Activated T-helper 1 cell treated with anti-CD3 and anti-CD28 coated beads, Interleukin-12 subunit alpha, Interleukin-12 subunit beta, Interleukin-2, Interleukin-4 antibody, amounts not matched to agents 30 ng/mL and 10 ng/mL and 1 ng/mL, durations not matched to agents 14 hours and 24 hours and 36 hours (primary cell): ENCODE measurements at regions of chr6 and their contacts with region 1.

Region 1: DNA sequence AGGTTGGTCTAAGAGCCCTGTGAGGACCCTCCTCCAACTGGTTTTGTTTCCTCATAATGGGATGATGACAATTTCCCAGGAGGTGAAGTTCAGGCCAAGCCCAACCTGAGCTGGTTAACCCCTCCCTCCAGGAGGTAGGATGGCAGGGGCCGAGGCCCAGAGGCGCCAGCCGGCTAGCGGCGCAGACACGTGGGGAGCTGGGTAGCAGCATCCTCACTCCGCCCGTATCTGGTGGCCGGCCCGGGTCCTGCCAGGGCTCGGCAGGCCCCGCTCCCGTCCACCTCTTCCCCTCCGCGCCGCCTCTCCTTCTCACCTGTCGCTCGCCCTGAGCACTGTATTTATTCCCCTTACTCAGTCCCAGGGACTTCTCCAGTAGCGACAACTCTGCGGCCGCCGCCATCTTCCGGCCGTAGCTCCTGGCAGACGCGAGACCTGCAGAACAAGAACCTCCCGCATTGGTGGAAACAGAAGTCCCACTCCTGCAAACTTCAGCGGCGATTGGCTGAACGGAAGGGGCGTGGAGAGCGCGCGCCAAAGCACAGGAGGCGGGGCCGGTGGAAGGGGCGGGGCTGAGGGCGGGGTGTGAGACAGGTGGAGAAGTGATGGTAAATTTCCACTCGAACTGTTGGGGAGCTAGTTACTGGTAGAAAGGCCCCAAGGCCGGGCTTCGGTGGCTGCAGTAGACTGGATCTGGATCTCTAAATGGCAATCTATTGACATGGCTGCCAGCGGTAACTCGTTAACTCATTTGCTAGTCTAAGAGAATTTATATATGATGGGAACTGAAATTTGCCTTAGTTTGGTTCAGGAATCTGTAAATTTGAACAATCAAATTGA is at the start of gene EEF1E1:
- DNase-seq: peak; percentile 87
- H3K4me3 Mint-ChIP-seq: peak within 1 kb of the TSS; percentile 92
- H3K27ac Mint-ChIP-seq: peak within 1 kb of the TSS; percentile 97
- H3K4me1 Mint-ChIP-seq: peaks cover 34% of the 10 kb centered on the region
- H3K27me3 Mint-ChIP-seq: peaks cover 4% of the 10 kb centered on the region
- total RNA-seq, gene EEF1E1: 92.8 and 99.8 TPM in 2 replicates

Region 2: GRCh38 chr6:7312616-7313504 is 789.5 kb before region 1 on chr6 and contains the start of gene SSR1:
- intact Hi-C with region 1: loop called (anchors 1 kb)
- DNase-seq: peak; percentile 95
- H3K4me3 Mint-ChIP-seq: peak within 1 kb of the TSS; percentile 98
- H3K27ac Mint-ChIP-seq: peak within 1 kb of the TSS; percentile 94
- H3K4me1 Mint-ChIP-seq: peaks cover 35% of the 10 kb centered on the region
- H3K27me3 Mint-ChIP-seq: no peaks in the 10 kb centered on the region
- total RNA-seq, gene SSR1: 160 and 168 TPM in 2 replicates

Region 3: GRCh38 chr6:8006208-8006607 is 96.1 kb before region 1 on chr6:
- intact Hi-C with region 1: no loop called
- DNase-seq: no peak
- H3K4me3 Mint-ChIP-seq: no peak overlapping the region
- H3K27ac Mint-ChIP-seq: no peak overlapping the region
- H3K4me1 Mint-ChIP-seq: no peaks in the 10 kb centered on the region
- H3K27me3 Mint-ChIP-seq: peaks cover 3% of the 10 kb centered on the region

Region 4: GRCh38 chr6:8017276-8017701 is 85.1 kb before region 1 on chr6:
- intact Hi-C with region 1: loop called (anchors 1 kb)
- DNase-seq: no peak
- H3K4me3 Mint-ChIP-seq: peak overlapping the region; percentile 86
- H3K27ac Mint-ChIP-seq: peak overlapping the region; percentile 97
- H3K4me1 Mint-ChIP-seq: peaks cover 22% of the 10 kb centered on the region
- H3K27me3 Mint-ChIP-seq: no peaks in the 10 kb centered on the region

Region 5: GRCh38 chr6:8086755-8087306 is 15.5 kb before region 1 on chr6:
- intact Hi-C with region 1: loop called (anchors 1 kb)
- DNase-seq: no peak
- H3K4me3 Mint-ChIP-seq: no peak overlapping the region
- H3K27ac Mint-ChIP-seq: peak overlapping the region; percentile 74
- H3K4me1 Mint-ChIP-seq: peaks cover 53% of the 10 kb centered on the region
- H3K27me3 Mint-ChIP-seq: no peaks in the 10 kb centered on the region

Region 6: DNA sequence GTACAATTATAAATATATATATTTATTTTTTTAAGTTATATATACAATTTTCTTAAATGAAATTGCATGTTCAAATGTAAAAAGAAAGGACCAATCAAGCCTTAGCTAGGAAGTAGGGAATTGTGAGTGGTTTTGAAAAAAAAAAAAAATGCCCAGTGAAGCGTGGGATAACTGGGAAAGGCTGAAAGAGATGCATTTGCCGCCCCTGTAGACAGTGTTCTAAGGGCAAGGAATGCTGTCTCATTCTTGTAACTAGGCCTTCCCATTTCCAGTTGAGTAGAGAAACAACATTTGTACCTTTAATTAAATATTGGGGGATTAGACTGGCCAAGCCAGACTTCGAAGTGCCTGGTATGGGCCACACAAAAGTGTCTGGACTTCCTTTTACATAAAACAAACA is 763.1 kb after region 1 on chr6:
- intact Hi-C with region 1: no loop called
- DNase-seq: no peak
- H3K4me3 Mint-ChIP-seq: no peak overlapping the region
- H3K27ac Mint-ChIP-seq: no peak overlapping the region
- H3K4me1 Mint-ChIP-seq: no peaks in the 10 kb centered on the region
- H3K27me3 Mint-ChIP-seq: no peaks in the 10 kb centered on the region